Tibial artery (tissue), 4 donors: ENCODE measurements at regions of chr2 and their contacts with region 1.

Region 1: GRCh38 chr2:17863539-17863938 is 14.9 kb upstream of the KCNS3 start:
- DNase-seq: no peak
- H3K4me3 ChIP-seq: no peak overlapping the region
- H3K27ac ChIP-seq: no peak overlapping the region
- H3K4me1 ChIP-seq: no peaks in the 10 kb centered on the region
- H3K27me3 ChIP-seq: peaks cover 0 to 3% of the 10 kb centered on the region in 2 donors
- CTCF ChIP-seq: no peak

Region 2: DNA sequence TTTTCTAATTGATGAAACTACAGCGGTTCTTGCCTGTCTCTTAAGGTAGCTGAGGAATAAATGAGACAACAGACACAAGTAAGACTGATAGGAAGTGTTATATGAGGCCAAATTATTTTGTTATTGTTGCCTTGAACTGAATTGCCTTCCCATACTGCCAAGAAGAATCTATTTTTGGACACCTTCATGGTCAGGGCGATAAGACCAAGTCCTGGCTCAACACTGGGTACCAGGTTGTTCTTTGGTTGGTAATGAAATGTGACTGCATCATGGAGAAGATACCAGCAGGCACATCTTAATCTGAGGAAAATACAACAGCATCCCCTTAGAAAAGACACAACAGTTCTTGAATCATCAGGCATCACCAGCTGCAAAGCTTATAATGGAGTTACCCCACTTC is 23.6 kb before region 1 on chr2:
- intact Hi-C with region 1: loop called (anchors 2 kb)
- DNase-seq: no peak
- H3K4me3 ChIP-seq: no peak overlapping the region
- H3K27ac ChIP-seq: no peak overlapping the region
- H3K4me1 ChIP-seq: no peaks in the 10 kb centered on the region
- H3K27me3 ChIP-seq: no peaks in the 10 kb centered on the region
- CTCF ChIP-seq: no peak